Endothelial cell of umbilical vein (primary cell): ENCODE measurements at regions of chr4 and their contacts with region 1.

Region 1: DNA sequence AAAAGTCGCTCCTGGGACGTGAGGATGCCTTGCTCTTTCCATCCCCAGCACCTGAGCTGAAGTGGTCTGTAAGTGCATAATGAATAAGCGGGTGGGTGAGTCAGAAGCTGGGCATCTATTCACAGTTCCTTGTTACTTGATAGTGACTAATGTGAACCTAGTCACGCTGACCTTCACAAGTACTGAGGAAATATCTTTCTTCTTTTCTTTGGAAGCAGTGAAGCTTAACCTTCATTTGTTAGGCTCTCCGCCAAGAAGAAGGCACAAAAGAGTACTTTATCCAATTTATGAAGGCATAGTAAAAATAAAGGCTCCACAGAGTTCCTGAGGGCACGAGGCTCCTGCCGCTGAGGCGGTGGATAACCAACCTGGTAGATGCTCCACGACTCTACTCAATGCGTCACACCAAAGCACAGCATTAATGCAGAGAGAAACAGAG is 475.7 kb upstream of the SLIT2 start:
- DNase-seq: peak; percentile 96
- H3K4me3 ChIP-seq: no peak overlapping the region
- H3K27ac ChIP-seq: peak overlapping the region; percentile 72
- H3K4me1 ChIP-seq: peaks cover 22% of the 10 kb centered on the region
- H3K27me3 ChIP-seq: no peaks in the 10 kb centered on the region
- CTCF ChIP-seq: no peak
- POLR2A ChIP-seq: no peak

Region 2: GRCh38 chr4:19721587-19721986 is 54.5 kb before region 1 on chr4:
- CTCF ChIA-PET with region 1: interaction called, 3 read pairs
- POLR2A ChIA-PET with region 1: no interaction called
- dilution Hi-C with region 1: no loop called
- intact Hi-C with region 1: loop called (anchors 2 kb)
- DNase-seq: peak; percentile 32
- H3K4me3 ChIP-seq: no peak overlapping the region
- H3K27ac ChIP-seq: no peak overlapping the region
- H3K4me1 ChIP-seq: peaks cover 39% of the 10 kb centered on the region
- H3K27me3 ChIP-seq: no peaks in the 10 kb centered on the region
- CTCF ChIP-seq: no peak
- POLR2A ChIP-seq: no peak

Region 3: DNA sequence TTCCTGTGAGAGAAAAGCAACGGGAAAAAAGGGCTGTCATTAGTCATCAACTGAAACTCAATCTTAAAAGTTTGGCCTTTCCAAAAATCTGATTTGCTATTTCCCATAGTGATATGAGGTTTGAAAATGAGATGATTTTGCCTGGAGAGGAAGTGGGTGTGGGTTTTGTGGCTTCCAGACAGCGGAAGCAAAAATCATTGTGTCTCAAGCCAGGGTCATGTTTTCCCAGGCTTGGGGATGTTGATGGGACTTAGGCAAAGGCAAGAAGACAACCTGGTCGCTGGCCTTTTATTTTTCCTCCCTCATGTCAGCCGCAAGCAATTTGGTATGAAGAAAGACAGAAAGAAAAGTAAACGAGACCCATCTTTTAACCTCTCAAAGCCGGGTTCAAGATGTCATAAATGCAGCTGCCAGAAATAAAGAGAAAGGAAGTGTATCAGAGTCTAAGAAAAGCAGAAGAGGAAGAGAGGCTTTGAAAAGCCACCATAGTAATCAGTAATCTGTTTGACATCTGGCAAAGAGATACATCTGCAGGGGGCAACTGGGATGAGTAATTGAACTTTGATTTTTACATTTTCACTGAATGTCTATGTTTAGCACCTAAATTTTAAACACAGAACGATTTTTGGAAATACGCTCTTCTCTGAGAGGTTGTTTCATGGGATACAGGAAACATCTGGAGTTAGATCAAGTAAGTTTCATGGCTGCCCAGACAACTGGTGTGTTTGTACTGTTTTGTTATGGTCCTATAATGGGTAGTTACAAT is 46.0 kb before region 1 on chr4:
- CTCF ChIA-PET with region 1: no interaction called
- POLR2A ChIA-PET with region 1: no interaction called
- dilution Hi-C with region 1: no loop called
- intact Hi-C with region 1: loop called (anchors 2 kb)
- DNase-seq: peak; percentile 86
- H3K4me3 ChIP-seq: no peak overlapping the region
- H3K27ac ChIP-seq: peak overlapping the region; percentile 87
- H3K4me1 ChIP-seq: peaks cover 31% of the 10 kb centered on the region
- H3K27me3 ChIP-seq: no peaks in the 10 kb centered on the region
- CTCF ChIP-seq: no peak
- POLR2A ChIP-seq: no peak

Region 4: GRCh38 chr4:19739101-19739720 is 36.8 kb before region 1 on chr4:
- CTCF ChIA-PET with region 1: interaction called, 3 read pairs
- POLR2A ChIA-PET with region 1: no interaction called
- dilution Hi-C with region 1: no loop called
- intact Hi-C with region 1: loop called (anchors 2 kb)
- DNase-seq: peak; percentile 96
- H3K4me3 ChIP-seq: peak overlapping the region in 2 of 3 experiments; percentile 9 to 41
- H3K27ac ChIP-seq: peak overlapping the region; percentile 84
- H3K4me1 ChIP-seq: peaks cover 22% of the 10 kb centered on the region
- H3K27me3 ChIP-seq: no peaks in the 10 kb centered on the region
- CTCF ChIP-seq: no peak
- POLR2A ChIP-seq: no peak

Region 5: DNA sequence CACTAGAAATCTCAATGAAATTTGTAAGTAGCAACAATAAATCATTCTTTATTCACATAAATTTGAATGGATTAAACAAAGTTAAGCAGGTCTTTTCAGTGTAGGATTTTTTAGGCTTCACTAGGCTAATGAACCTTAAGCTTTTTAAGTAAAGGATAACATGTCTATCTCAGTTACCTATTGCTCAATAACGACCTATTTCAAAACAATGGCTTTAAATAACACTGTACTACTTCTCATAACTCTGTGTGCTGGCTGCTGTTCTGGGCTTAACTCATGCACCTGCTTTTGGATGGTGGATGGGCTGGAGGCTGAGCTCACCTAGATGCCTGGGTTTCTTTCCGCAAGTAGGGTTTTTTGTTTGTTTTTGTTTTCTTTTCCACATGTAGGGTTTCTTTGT is 19.4 kb before region 1 on chr4:
- CTCF ChIA-PET with region 1: no interaction called
- POLR2A ChIA-PET with region 1: no interaction called
- dilution Hi-C with region 1: no loop called
- intact Hi-C with region 1: no loop called
- DNase-seq: no peak
- H3K4me3 ChIP-seq: no peak overlapping the region
- H3K27ac ChIP-seq: no peak overlapping the region
- H3K4me1 ChIP-seq: no peaks in the 10 kb centered on the region
- H3K27me3 ChIP-seq: no peaks in the 10 kb centered on the region
- CTCF ChIP-seq: no peak
- POLR2A ChIP-seq: no peak

Region 6: GRCh38 chr4:19791422-19792123 is 15.5 kb after region 1 on chr4:
- CTCF ChIA-PET with region 1: no interaction called
- POLR2A ChIA-PET with region 1: no interaction called
- dilution Hi-C with region 1: no loop called
- intact Hi-C with region 1: loop called (anchors 1 kb)
- DNase-seq: peak; percentile 94
- H3K4me3 ChIP-seq: no peak overlapping the region
- H3K27ac ChIP-seq: peak overlapping the region; percentile 27
- H3K4me1 ChIP-seq: peaks cover 12% of the 10 kb centered on the region
- H3K27me3 ChIP-seq: no peaks in the 10 kb centered on the region
- CTCF ChIP-seq: peak; percentile 25 to 40
- POLR2A ChIP-seq: no peak